Naive thymus-derived CD4-positive, alpha-beta T cell (primary cell): ENCODE measurements at regions of chr5 and their contacts with region 1.

Region 1: GRCh38 chr5:159444441-159445082 is 114.3 kb upstream of the IL12B start:
- DNase-seq: peak in 6 of 9 donors; percentile 10 to 55 (median 32)
- ATAC-seq: peak; percentile 47
- H3K4me3 ChIP-seq: no peak overlapping the region
- H3K4me3 Mint-ChIP-seq: no peak overlapping the region
- H3K27ac ChIP-seq: no peak overlapping the region
- H3K27ac Mint-ChIP-seq: peak overlapping the region in 3 of 9 donors; percentile 41 to 69 (median 48)
- H3K4me1 ChIP-seq: no peaks in the 10 kb centered on the region
- H3K4me1 Mint-ChIP-seq: peaks cover 0 to 9% (median 0%) of the 10 kb centered on the region in 7 donors
- H3K27me3 ChIP-seq: no peaks in the 10 kb centered on the region
- H3K27me3 Mint-ChIP-seq: peaks cover 0 to 58% (median 0%) of the 10 kb centered on the region in 5 donors

Region 2: DNA sequence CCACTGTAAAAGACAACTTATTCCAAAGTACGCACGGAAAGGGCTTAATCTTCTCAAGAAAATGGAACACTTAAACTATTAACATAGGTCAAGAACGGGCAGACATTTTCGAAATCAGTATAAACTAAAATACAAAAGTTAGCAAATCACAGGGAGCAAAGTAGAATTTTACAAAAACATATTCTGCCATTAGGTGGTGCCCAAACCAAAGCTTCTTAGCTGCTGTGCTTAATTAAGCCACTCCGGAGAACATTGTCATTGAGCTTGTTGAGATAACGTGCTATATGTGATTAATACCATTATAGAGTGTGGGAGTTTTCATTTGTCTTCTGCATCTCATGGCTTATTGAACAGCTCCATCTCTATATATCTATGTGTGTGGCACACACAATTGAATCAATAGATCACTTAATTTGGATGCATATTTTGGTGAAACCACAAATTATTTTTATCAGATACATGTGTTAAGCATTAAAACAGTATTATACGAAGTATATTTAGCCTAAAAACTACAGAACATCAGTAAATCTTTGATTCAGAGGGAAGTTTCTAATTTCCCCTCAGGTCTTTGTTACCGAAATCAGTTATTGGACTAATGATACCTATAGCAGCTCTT is 158.0 kb before region 1 on chr5:
- CTCF ChIA-PET with region 1: interaction called, 10 read pairs
- POLR2A ChIA-PET with region 1: interaction called, 3 read pairs
- intact Hi-C with region 1: loop called in 1 of 2 experiments (anchors 1 kb)
- DNase-seq: peak in 7 of 9 donors; percentile 16 to 53 (median 34)
- ATAC-seq: peak; percentile 60
- H3K4me3 ChIP-seq: no peak overlapping the region
- H3K4me3 Mint-ChIP-seq: no peak overlapping the region
- H3K27ac ChIP-seq: no peak overlapping the region
- H3K27ac Mint-ChIP-seq: peak overlapping the region in 1 of 9 donors; percentile 19
- H3K4me1 ChIP-seq: no peaks in the 10 kb centered on the region
- H3K4me1 Mint-ChIP-seq: peaks cover 0 to 1% (median 0%) of the 10 kb centered on the region in 7 donors
- H3K27me3 ChIP-seq: no peaks in the 10 kb centered on the region
- H3K27me3 Mint-ChIP-seq: peaks cover 0 to 4% (median 0%) of the 10 kb centered on the region in 5 donors

Region 3: DNA sequence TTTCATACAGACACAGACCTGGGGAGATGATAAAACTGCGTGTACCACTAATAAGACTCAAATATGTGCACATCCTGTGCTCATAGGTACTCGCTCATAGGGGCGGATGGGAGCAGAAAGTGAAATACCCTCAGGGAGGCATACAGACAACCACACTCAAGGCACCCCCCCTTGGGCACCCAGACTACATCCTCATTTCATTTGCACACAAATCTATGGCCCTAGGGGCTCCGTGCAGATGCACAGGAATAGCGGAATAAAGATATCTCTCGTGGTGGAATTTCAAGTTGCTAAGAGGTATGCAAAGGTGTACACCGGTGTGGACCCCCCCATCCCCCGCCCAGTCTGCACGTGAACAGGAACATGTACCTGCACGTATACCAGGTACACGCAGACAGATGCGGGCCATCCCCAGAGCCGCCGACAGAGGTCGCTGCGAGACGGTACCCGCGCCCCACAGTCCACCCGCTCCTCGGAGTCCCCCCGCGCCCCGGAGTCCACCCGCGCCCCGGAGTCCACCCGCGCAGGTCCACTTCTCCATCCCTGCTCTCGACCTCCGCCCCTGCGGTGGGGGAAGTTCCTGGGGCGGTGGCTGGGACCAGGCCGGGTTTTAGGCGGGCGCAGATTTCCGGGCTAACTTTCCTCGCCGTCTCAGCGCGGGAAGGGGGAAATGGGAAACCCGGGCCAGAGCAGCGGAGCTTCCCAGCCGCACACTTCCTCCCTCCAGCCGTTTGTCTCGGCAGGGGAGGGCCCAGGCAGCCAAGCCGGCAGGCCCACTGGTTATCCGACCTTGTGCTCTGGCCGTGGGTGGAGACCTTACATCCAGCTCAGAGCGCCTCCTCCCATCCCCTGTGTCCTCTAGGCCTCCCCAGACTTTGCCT is 113.2 kb before region 1 on chr5:
- CTCF ChIA-PET with region 1: interaction called, 3 read pairs
- POLR2A ChIA-PET with region 1: no interaction called
- intact Hi-C with region 1: loop called in 1 of 2 experiments (anchors 1 kb)
- DNase-seq: peak; percentile 43 to 79 (median 65)
- ATAC-seq: peak; percentile 93
- H3K4me3 ChIP-seq: peak overlapping the region; percentile 46
- H3K4me3 Mint-ChIP-seq: peak overlapping the region; percentile 66 to 80 (median 74)
- H3K27ac ChIP-seq: peak overlapping the region; percentile 22
- H3K27ac Mint-ChIP-seq: peak overlapping the region in 6 of 9 donors; percentile 9 to 75 (median 64)
- H3K4me1 ChIP-seq: peaks cover 0 to 4% of the 10 kb centered on the region in 2 donors
- H3K4me1 Mint-ChIP-seq: peaks cover 3 to 52% (median 23%) of the 10 kb centered on the region in 7 donors
- H3K27me3 ChIP-seq: no peaks in the 10 kb centered on the region
- H3K27me3 Mint-ChIP-seq: peaks cover 0 to 35% (median 0%) of the 10 kb centered on the region in 5 donors

Region 4: GRCh38 chr5:159826351-159827214 is 382.0 kb after region 1 on chr5:
- CTCF ChIA-PET with region 1: no interaction called
- POLR2A ChIA-PET with region 1: no interaction called
- intact Hi-C with region 1: no loop called
- DNase-seq: no peak
- ATAC-seq: peak; percentile 29
- H3K4me3 ChIP-seq: no peak overlapping the region
- H3K4me3 Mint-ChIP-seq: no peak overlapping the region
- H3K27ac ChIP-seq: no peak overlapping the region
- H3K27ac Mint-ChIP-seq: no peak overlapping the region
- H3K4me1 ChIP-seq: no peaks in the 10 kb centered on the region
- H3K4me1 Mint-ChIP-seq: peaks cover 0 to 2% (median 0%) of the 10 kb centered on the region in 7 donors
- H3K27me3 ChIP-seq: no peaks in the 10 kb centered on the region
- H3K27me3 Mint-ChIP-seq: peaks cover 5 to 25% (median 17%) of the 10 kb centered on the region in 5 donors

Region 5: GRCh38 chr5:159915904-159916840 is 471.6 kb after region 1 on chr5 and contains the start of gene ADRA1B:
- CTCF ChIA-PET with region 1: no interaction called
- POLR2A ChIA-PET with region 1: no interaction called
- intact Hi-C with region 1: loop called (anchors 1 to 2 kb)
- DNase-seq: peak in 8 of 9 donors; percentile 16 to 47 (median 22)
- ATAC-seq: peak; percentile 77
- H3K4me3 ChIP-seq: no peak within 1 kb of the TSS
- H3K4me3 Mint-ChIP-seq: peak within 1 kb of the TSS; percentile 56 to 78 (median 71)
- H3K27ac ChIP-seq: no peak within 1 kb of the TSS
- H3K27ac Mint-ChIP-seq: no peak within 1 kb of the TSS
- H3K4me1 ChIP-seq: no peaks in the 10 kb centered on the region
- H3K4me1 Mint-ChIP-seq: peaks cover 4 to 15% (median 9%) of the 10 kb centered on the region in 7 donors
- H3K27me3 ChIP-seq: peaks cover 3 to 8% of the 10 kb centered on the region in 2 donors
- H3K27me3 Mint-ChIP-seq: peaks cover 59 to 67% (median 62%) of the 10 kb centered on the region in 5 donors
- total RNA-seq, gene ADRA1B: 0.10 TPM in 1 of 5 experiments, not detected in the others

Region 6: GRCh38 chr5:159987031-159987674 is 542.6 kb after region 1 on chr5:
- CTCF ChIA-PET with region 1: interaction called, 28 read pairs
- POLR2A ChIA-PET with region 1: no interaction called
- intact Hi-C with region 1: loop called (anchors 1 kb)
- DNase-seq: peak; percentile 56 to 73 (median 69)
- ATAC-seq: peak; percentile 92
- H3K4me3 ChIP-seq: peak overlapping the region; percentile 58
- H3K4me3 Mint-ChIP-seq: peak overlapping the region; percentile 55 to 78 (median 66)
- H3K27ac ChIP-seq: no peak overlapping the region
- H3K27ac Mint-ChIP-seq: peak overlapping the region in 3 of 9 donors; percentile 70 to 83 (median 70)
- H3K4me1 ChIP-seq: peaks cover 0 to 6% of the 10 kb centered on the region in 2 donors
- H3K4me1 Mint-ChIP-seq: peaks cover 0 to 3% (median 0%) of the 10 kb centered on the region in 7 donors
- H3K27me3 ChIP-seq: peaks cover 0 to 5% of the 10 kb centered on the region in 2 donors
- H3K27me3 Mint-ChIP-seq: peaks cover 24 to 70% (median 34%) of the 10 kb centered on the region in 5 donors

Region 7: DNA sequence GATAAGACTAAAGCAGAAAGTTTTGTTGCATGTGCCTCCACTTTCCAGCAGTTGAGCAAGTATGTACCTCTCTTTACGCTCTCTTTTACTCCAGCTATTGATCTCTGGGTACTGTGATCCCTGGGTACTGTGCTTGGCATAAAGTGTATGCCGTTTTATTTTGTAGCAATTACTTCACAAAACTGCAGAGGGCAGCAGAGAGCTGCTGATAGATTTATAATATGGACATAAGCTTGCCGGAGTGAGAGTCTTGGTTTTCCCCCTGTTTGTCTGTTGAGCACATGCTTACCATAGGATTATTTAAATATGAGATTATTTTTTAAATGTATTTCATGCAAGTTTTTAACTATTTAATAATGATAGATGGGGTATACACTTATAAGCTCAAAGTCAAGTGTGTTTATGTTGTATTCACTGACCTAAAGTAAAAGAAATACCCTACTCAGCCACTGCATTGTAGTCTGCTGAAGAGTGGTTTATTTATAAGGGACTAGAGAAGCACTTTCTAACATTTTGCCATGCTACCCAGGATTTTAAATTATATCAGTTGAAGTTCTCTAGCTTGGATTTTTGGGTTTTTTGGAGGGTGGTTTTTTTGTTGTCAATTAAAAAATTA is 577.4 kb after region 1 on chr5:
- CTCF ChIA-PET with region 1: no interaction called
- POLR2A ChIA-PET with region 1: no interaction called
- intact Hi-C with region 1: loop called in 1 of 2 experiments (anchors 1 kb)
- DNase-seq: peak in 8 of 9 donors; percentile 12 to 76 (median 64)
- ATAC-seq: peak; percentile 97
- H3K4me3 ChIP-seq: no peak overlapping the region
- H3K4me3 Mint-ChIP-seq: peak overlapping the region in 1 of 10 donors; percentile 6
- H3K27ac ChIP-seq: no peak overlapping the region
- H3K27ac Mint-ChIP-seq: peak overlapping the region in 7 of 9 donors; percentile 15 to 93 (median 68)
- H3K4me1 ChIP-seq: peaks cover 3 to 15% of the 10 kb centered on the region in 2 donors
- H3K4me1 Mint-ChIP-seq: peaks cover 17 to 53% (median 37%) of the 10 kb centered on the region in 7 donors
- H3K27me3 ChIP-seq: no peaks in the 10 kb centered on the region
- H3K27me3 Mint-ChIP-seq: no peaks in the 10 kb centered on the region

Region 8: GRCh38 chr5:160342403-160342941 is 897.9 kb after region 1 on chr5:
- CTCF ChIA-PET with region 1: no interaction called
- POLR2A ChIA-PET with region 1: no interaction called
- intact Hi-C with region 1: loop called (anchors 1 to 10 kb)
- DNase-seq: no peak
- ATAC-seq: no peak
- H3K4me3 ChIP-seq: no peak overlapping the region
- H3K4me3 Mint-ChIP-seq: no peak overlapping the region
- H3K27ac ChIP-seq: no peak overlapping the region
- H3K27ac Mint-ChIP-seq: no peak overlapping the region
- H3K4me1 ChIP-seq: no peaks in the 10 kb centered on the region
- H3K4me1 Mint-ChIP-seq: peaks cover 0 to 4% (median 0%) of the 10 kb centered on the region in 7 donors
- H3K27me3 ChIP-seq: no peaks in the 10 kb centered on the region
- H3K27me3 Mint-ChIP-seq: peaks cover 0 to 4% (median 0%) of the 10 kb centered on the region in 5 donors